CD8-positive, alpha-beta T cell (primary cell): ENCODE measurements at regions of chr14 and their contacts with region 1.

Region 1: GRCh38 chr14:75982266-75983018 is 647 bp upstream of the TGFB3 start:
- DNase-seq: peak; percentile 57 to 87 (median 77)
- ATAC-seq: peak; percentile 59
- H3K4me3 ChIP-seq: peak overlapping the region; percentile 59 to 87
- H3K4me3 Mint-ChIP-seq: peak overlapping the region; percentile 82
- H3K27ac ChIP-seq: peak overlapping the region; percentile 64 to 75
- H3K27ac Mint-ChIP-seq: peak overlapping the region; percentile 86
- H3K4me1 ChIP-seq: peaks cover 33% of the 10 kb centered on the region
- H3K4me1 Mint-ChIP-seq: peaks cover 57% of the 10 kb centered on the region
- H3K27me3 ChIP-seq: no peaks in the 10 kb centered on the region
- H3K27me3 Mint-ChIP-seq: no peaks in the 10 kb centered on the region
- CTCF ChIP-seq: peak; percentile 48

Region 2: DNA sequence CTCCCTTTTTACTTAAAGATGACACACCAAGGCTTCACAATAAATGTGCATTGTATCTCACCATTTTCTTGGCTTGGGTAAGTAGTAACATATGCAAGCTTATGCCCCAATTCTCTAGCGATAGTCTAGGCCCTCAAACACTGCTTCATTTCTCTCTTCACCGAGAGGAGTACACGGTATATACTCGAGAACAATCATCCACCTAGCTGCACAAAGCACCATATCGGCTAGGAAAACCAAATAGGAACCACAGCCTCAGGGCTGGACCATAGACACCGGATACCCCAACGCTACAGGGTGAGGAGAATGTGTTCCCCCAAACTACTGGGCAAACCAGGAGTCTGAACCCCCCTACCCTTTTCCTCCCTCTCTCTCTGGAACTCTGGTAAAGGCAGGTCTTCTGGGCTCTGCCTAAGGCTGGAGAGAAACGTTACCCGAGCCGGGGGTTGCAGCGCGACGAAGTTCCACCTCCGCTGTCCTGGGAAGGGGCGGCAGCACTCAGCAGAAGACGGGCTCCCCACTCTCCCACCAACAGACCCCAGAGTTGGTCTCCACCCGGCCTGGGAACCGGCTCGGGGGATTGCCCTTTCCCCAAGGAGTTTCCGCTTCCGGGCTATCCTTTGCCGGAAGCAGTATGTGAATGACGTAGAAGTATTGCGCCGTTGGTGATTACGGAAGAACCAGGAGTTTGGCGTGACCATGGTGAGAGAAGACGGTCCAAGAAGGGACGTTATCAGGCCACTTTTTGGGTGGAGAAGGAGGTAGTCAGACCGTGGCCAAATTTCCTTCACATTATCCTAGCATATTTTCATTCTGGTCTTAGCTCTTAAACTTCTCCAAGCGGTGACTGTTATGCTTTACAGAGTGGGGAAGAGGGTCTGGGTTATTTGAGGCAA is 1269.7 kb before region 1 on chr14 and contains the starts of genes AREL1 and FCF1:
- CTCF ChIA-PET with region 1: no interaction called
- POLR2A ChIA-PET with region 1: no interaction called
- intact Hi-C with region 1: loop called in 1 of 2 experiments (anchors 10 kb)
- DNase-seq: peak; percentile 56 to 94 (median 80)
- ATAC-seq: peak; percentile 93
- H3K4me3 ChIP-seq: peak within 1 kb of the TSS; percentile 63 to 87
- H3K4me3 Mint-ChIP-seq: peak within 1 kb of the TSS; percentile 98
- H3K27ac ChIP-seq: peak within 1 kb of the TSS; percentile 78 to 93
- H3K27ac Mint-ChIP-seq: peak within 1 kb of the TSS; percentile 99
- H3K4me1 ChIP-seq: peaks cover 24% of the 10 kb centered on the region
- H3K4me1 Mint-ChIP-seq: peaks cover 65% of the 10 kb centered on the region
- H3K27me3 ChIP-seq: no peaks in the 10 kb centered on the region
- H3K27me3 Mint-ChIP-seq: no peaks in the 10 kb centered on the region
- CTCF ChIP-seq: no peak
- total RNA-seq, gene AREL1: 44.5 to 60.1 TPM
- total RNA-seq, gene FCF1: 32.6 to 34.0 TPM

Region 3: GRCh38 chr14:75126679-75127473 is 855.6 kb before region 1 on chr14 and contains the start of gene NEK9:
- CTCF ChIA-PET with region 1: no interaction called
- POLR2A ChIA-PET with region 1: no interaction called
- intact Hi-C with region 1: loop called in 1 of 2 experiments (anchors 5 kb)
- DNase-seq: peak; percentile 77 to 93 (median 89)
- ATAC-seq: peak; percentile 82
- H3K4me3 ChIP-seq: peak within 1 kb of the TSS; percentile 87 to 95
- H3K4me3 Mint-ChIP-seq: peak within 1 kb of the TSS; percentile 95
- H3K27ac ChIP-seq: peak within 1 kb of the TSS; percentile 87 to 92
- H3K27ac Mint-ChIP-seq: peak within 1 kb of the TSS; percentile 98
- H3K4me1 ChIP-seq: peaks cover 23% of the 10 kb centered on the region
- H3K4me1 Mint-ChIP-seq: peaks cover 46% of the 10 kb centered on the region
- H3K27me3 ChIP-seq: no peaks in the 10 kb centered on the region
- H3K27me3 Mint-ChIP-seq: no peaks in the 10 kb centered on the region
- CTCF ChIP-seq: no peak
- total RNA-seq, gene NEK9: 40.7 to 42.9 TPM

Region 4: DNA sequence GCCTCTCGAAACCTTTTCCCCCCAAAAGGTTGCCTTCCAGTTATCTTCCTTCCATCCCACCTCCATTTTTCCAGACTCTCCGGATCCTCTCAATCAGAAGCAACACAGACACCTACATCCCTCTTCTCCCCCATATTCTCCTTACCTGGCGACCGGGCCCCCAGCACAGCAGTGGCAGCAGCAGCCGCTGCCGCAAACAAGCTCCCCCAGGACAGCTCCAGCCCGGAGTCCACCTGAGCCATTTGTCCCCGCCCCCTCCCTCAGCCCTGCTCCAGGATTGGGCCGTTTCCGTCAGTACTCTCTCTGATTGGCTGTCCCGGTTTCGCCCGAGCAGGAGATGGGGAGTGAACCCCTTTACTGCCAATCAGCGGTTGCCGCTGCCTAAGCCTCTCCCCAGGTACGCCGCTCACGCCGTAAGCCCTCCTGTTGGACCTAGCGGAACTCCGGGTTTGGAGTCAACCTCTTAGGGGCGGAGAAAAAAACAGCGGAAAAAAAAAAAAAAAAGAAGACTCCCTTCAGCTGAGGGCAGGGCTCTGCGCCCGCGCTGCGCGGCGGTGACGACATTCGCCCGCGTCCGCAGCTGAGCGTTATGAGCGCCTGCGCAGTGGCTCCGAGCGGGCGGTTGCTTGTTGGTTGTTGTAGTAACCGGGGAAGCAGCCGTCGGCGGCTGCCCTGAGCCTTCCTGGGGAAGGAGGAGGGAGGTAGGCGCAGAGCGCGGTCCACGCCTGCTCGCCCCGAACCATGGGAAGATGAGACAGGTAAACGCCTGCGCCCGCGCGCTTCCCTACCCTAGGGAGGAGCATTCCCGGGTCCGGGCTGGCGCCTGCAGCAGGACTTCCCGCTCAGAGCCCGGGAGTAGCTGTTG is 321.6 kb before region 1 on chr14 and contains the starts of genes ERG28 and TTLL5:
- CTCF ChIA-PET with region 1: interaction called, 5 read pairs
- POLR2A ChIA-PET with region 1: no interaction called
- intact Hi-C with region 1: loop called (anchors 1 to 2 kb)
- DNase-seq: peak; percentile 94 to 99 (median 95)
- ATAC-seq: peak; percentile 93
- H3K4me3 ChIP-seq: peak within 1 kb of the TSS; percentile 86 to 87
- H3K4me3 Mint-ChIP-seq: peak within 1 kb of the TSS; percentile 98
- H3K27ac ChIP-seq: peak within 1 kb of the TSS; percentile 85 to 93
- H3K27ac Mint-ChIP-seq: peak within 1 kb of the TSS; percentile 97
- H3K4me1 ChIP-seq: peaks cover 10% of the 10 kb centered on the region
- H3K4me1 Mint-ChIP-seq: peaks cover 36% of the 10 kb centered on the region
- H3K27me3 ChIP-seq: no peaks in the 10 kb centered on the region
- H3K27me3 Mint-ChIP-seq: no peaks in the 10 kb centered on the region
- CTCF ChIP-seq: no peak
- total RNA-seq, gene ERG28: 6.6 to 6.7 TPM
- total RNA-seq, gene TTLL5: 17.6 to 17.7 TPM

Region 5: GRCh38 chr14:75906676-75907280 is 75.7 kb before region 1 on chr14:
- CTCF ChIA-PET with region 1: interaction called, 162 read pairs
- POLR2A ChIA-PET with region 1: interaction called, 6 read pairs
- intact Hi-C with region 1: loop called (anchors 1 kb)
- DNase-seq: peak; percentile 30 to 76 (median 70)
- ATAC-seq: peak; percentile 49
- H3K4me3 ChIP-seq: no peak overlapping the region
- H3K4me3 Mint-ChIP-seq: no peak overlapping the region
- H3K27ac ChIP-seq: no peak overlapping the region
- H3K27ac Mint-ChIP-seq: no peak overlapping the region
- H3K4me1 ChIP-seq: no peaks in the 10 kb centered on the region
- H3K4me1 Mint-ChIP-seq: no peaks in the 10 kb centered on the region
- H3K27me3 ChIP-seq: no peaks in the 10 kb centered on the region
- H3K27me3 Mint-ChIP-seq: no peaks in the 10 kb centered on the region
- CTCF ChIP-seq: peak; percentile 86

Region 6: GRCh38 chr14:76151398-76152339 is 169.2 kb after region 1 on chr14 and contains the start of gene GPATCH2L:
- CTCF ChIA-PET with region 1: no interaction called
- POLR2A ChIA-PET with region 1: no interaction called
- intact Hi-C with region 1: loop called (anchors 1 to 2 kb)
- DNase-seq: peak; percentile 95 to 98 (median 97)
- ATAC-seq: peak; percentile 87
- H3K4me3 ChIP-seq: peak within 1 kb of the TSS; percentile 86 to 99
- H3K4me3 Mint-ChIP-seq: peak within 1 kb of the TSS; percentile 93
- H3K27ac ChIP-seq: peak within 1 kb of the TSS; percentile 85 to 98
- H3K27ac Mint-ChIP-seq: peak within 1 kb of the TSS; percentile 95
- H3K4me1 ChIP-seq: peaks cover 47% of the 10 kb centered on the region
- H3K4me1 Mint-ChIP-seq: peaks cover 54% of the 10 kb centered on the region
- H3K27me3 ChIP-seq: no peaks in the 10 kb centered on the region
- H3K27me3 Mint-ChIP-seq: no peaks in the 10 kb centered on the region
- CTCF ChIP-seq: no peak
- total RNA-seq, gene GPATCH2L: 74.4 to 78.1 TPM